ENCODE measurements at regions of chr1 and their contacts with region 1.

Region 1: GRCh38 chr1:100928128-100928527 is 32.2 kb downstream of the SLC30A7 start:
- DNase-seq: no peak
- ATAC-seq: peak in 1 of 2 donors; percentile 12
- H3K4me3 Mint-ChIP-seq: no peak overlapping the region
- H3K27ac Mint-ChIP-seq: no peak overlapping the region
- H3K4me1 Mint-ChIP-seq: peaks cover 20 to 58% (median 34%) of the 10 kb centered on the region in 4 donors
- H3K27me3 Mint-ChIP-seq: no peaks in the 10 kb centered on the region

Region 2: DNA sequence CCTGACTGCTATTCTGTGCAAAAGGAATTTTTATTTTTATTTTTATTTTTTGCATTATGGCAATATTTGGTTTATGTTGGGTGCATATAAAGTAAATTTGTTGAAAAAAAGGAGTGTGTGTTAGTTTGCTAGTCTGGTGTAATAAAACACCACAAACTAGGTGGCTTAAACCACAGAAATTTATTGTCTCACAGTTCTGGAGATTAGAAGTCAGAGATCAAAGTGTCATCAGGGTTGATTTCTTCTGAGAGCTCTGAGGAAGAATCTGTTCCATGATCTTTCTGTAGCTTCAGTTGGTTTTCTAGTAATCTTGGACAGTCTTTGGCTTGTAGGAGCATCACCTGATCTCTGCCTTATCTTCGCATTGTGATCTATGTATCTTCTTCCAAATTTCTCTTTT is 25.8 kb before region 1 on chr1:
- POLR2A ChIA-PET with region 1: no interaction called
- DNase-seq: no peak
- ATAC-seq: no peak
- H3K4me3 Mint-ChIP-seq: no peak overlapping the region
- H3K27ac Mint-ChIP-seq: no peak overlapping the region
- H3K4me1 Mint-ChIP-seq: peaks cover 15 to 73% (median 64%) of the 10 kb centered on the region in 4 donors
- H3K27me3 Mint-ChIP-seq: no peaks in the 10 kb centered on the region

Region 3: DNA sequence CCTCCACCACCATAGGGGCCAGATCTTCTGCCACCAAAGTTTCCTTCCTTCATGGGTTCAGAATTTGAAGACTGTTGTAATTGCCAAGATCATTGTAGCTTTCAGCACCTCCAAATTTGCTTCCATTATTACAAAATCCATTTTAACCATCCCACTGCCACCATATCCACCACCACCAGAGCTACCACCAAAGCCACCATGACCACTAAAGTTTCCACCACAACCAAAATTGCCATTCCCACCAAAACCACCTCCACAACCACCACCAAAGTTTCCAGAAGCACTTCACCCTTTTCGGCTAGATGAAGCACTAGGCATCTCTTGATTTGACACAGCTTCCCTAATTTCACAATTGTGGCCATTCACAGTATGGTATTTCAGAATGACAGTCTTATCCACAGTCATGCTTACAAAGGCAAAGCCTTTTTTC is 13.0 kb after region 1 on chr1:
- POLR2A ChIA-PET with region 1: interaction called, 29 read pairs
- DNase-seq: no peak
- ATAC-seq: no peak
- H3K4me3 Mint-ChIP-seq: peak overlapping the region in 7 of 10 donors; percentile 55 to 78 (median 74)
- H3K27ac Mint-ChIP-seq: peak overlapping the region; percentile 83 to 96 (median 92)
- H3K4me1 Mint-ChIP-seq: peaks cover 31 to 62% (median 48%) of the 10 kb centered on the region in 4 donors
- H3K27me3 Mint-ChIP-seq: no peaks in the 10 kb centered on the region

Region 4: DNA sequence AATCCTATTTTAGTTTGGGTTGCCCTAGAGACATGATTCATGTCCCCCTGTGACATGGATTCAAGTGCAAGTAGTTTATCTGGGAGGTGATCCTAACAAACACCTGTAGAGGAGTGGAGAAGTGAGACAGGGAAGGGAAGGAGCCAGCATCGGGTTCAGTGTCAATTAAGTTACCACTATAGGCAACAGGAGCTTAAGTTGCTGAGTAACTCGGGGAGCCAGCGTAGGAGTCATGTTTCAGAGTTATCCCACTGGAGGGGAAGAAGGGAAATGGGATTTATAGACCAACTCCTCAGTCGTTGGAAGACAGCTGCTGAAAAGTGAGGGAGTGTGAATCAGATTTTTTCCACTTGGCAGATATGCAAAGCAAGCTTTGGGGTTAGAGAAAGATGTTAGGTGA is 22.7 kb after region 1 on chr1:
- POLR2A ChIA-PET with region 1: interaction called, 49 read pairs
- DNase-seq: no peak
- ATAC-seq: no peak
- H3K4me3 Mint-ChIP-seq: peak overlapping the region in 5 of 10 donors; percentile 6 to 58 (median 17)
- H3K27ac Mint-ChIP-seq: peak overlapping the region in 9 of 10 donors; percentile 58 to 94 (median 78)
- H3K4me1 Mint-ChIP-seq: peaks cover 29 to 86% (median 62%) of the 10 kb centered on the region in 4 donors
- H3K27me3 Mint-ChIP-seq: peaks cover 0 to 2% (median 0%) of the 10 kb centered on the region in 5 donors

Region 5: GRCh38 chr1:101112051-101112780 is 184.1 kb after region 1 on chr1:
- POLR2A ChIA-PET with region 1: interaction called, 10 read pairs
- DNase-seq: peak; percentile 56 to 93 (median 84)
- ATAC-seq: peak; percentile 90 to 94
- H3K4me3 Mint-ChIP-seq: peak overlapping the region; percentile 50 to 86 (median 78)
- H3K27ac Mint-ChIP-seq: peak overlapping the region; percentile 97 to 100 (median 99)
- H3K4me1 Mint-ChIP-seq: peaks cover 39 to 72% (median 61%) of the 10 kb centered on the region in 4 donors
- H3K27me3 Mint-ChIP-seq: no peaks in the 10 kb centered on the region

Measured in naive thymus-derived CD8-positive, alpha-beta T cell (primary cell).